IMR-90 (cell line): ENCODE measurements at regions of chr7 and their contacts with region 1.

Region 1: DNA sequence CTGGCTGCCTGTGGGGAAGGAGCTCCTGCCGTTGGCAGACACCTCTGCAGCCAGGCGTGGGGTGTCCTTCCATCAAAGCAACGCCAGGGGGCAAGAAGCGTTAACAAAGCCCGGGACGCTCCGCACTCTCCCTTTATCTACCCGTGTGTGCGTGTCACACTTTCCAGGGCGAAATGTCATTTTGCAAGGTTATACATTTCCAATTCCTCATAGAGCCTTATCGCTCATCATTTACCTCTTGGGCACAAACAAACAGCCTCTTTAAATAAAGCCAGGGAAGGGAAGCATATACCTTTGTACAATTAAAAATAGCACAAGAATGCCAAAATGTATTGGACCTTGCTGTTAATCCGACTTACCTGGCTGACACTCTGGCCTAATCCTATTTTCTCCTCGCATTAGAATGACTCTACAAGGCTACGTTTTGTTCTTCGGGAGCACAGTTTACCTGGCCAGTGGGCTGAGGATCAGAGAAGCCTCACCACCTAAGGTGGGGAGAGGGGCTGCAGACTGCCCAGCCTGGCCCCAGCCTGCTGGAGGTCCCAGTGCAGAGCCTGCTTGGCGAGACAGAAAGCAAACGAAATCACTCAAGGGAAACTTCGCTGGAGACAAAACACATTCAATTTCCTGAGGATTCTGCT is 77.6 kb upstream of the EN2 start:
- DNase-seq: peak; percentile 54
- ATAC-seq: peak; percentile 83
- H3K4me3 ChIP-seq: no peak overlapping the region
- H3K27ac ChIP-seq: no peak overlapping the region
- H3K4me1 ChIP-seq: no peaks in the 10 kb centered on the region; the same call in 1 of the 2 replicates
- H3K27me3 ChIP-seq: peaks cover 81% of the 10 kb centered on the region
- CTCF ChIP-seq: peak; percentile 54
- POLR2A ChIP-seq: no peak
- RAD21 ChIP-seq: peak; percentile 37

Region 2: DNA sequence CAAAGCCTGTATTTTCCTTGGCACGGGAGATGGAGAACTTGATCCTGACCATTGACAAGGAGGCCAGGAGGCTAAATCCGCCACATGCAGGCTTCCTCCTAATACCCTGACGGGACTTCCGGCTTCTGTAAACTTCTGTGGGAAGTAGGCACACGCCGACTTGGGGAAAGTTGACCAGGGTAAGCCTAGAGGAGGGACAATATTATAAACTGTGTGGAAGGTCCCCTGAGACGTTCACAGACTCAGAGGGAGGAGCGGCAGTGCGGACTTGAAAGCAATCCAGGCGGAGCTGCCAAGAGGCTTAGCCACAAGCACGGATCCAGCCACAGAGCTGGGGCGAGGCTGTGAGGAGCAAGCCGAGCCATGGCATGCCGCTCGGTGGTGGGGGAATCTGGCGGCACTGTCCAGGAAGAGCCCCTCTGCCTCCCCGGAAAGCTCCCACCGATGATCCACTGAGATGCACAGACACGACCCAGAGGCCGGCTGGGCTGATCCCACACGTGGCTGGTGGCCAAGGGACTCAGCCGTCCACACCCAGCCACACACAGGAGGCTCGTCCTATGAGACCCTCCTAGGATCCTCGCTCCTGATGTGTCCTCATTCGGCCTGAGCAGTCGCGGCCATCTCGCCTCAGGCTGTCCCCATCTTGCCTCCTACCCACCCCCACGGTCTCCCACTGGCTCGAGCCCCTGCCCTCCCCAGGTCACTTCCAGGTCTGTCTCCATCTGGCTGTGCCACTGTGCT is 122.7 kb before region 1 on chr7:
- CTCF ChIA-PET with region 1: no interaction called
- POLR2A ChIA-PET with region 1: no interaction called
- dilution Hi-C with region 1: no loop called
- in situ Hi-C with region 1: no loop called
- intact Hi-C with region 1: no loop called
- DNase-seq: no peak
- ATAC-seq: no peak
- H3K4me3 ChIP-seq: no peak overlapping the region
- H3K27ac ChIP-seq: no peak overlapping the region
- H3K4me1 ChIP-seq: no peaks in the 10 kb centered on the region
- H3K27me3 ChIP-seq: peaks cover 3% of the 10 kb centered on the region; the same call in 1 of the 2 replicates
- CTCF ChIP-seq: no peak
- POLR2A ChIP-seq: no peak
- RAD21 ChIP-seq: no peak

Region 3: GRCh38 chr7:155405399-155406318 is 25.3 kb after region 1 on chr7:
- CTCF ChIA-PET with region 1: no interaction called
- POLR2A ChIA-PET with region 1: no interaction called
- dilution Hi-C with region 1: no loop called
- in situ Hi-C with region 1: no loop called
- intact Hi-C with region 1: no loop called
- DNase-seq: no peak
- ATAC-seq: peak; percentile 63
- H3K4me3 ChIP-seq: no peak overlapping the region
- H3K27ac ChIP-seq: no peak overlapping the region
- H3K4me1 ChIP-seq: no peaks in the 10 kb centered on the region
- H3K27me3 ChIP-seq: peaks cover 4% of the 10 kb centered on the region; the same call in 1 of the 2 replicates
- CTCF ChIP-seq: no peak
- POLR2A ChIP-seq: no peak
- RAD21 ChIP-seq: no peak

Region 4: DNA sequence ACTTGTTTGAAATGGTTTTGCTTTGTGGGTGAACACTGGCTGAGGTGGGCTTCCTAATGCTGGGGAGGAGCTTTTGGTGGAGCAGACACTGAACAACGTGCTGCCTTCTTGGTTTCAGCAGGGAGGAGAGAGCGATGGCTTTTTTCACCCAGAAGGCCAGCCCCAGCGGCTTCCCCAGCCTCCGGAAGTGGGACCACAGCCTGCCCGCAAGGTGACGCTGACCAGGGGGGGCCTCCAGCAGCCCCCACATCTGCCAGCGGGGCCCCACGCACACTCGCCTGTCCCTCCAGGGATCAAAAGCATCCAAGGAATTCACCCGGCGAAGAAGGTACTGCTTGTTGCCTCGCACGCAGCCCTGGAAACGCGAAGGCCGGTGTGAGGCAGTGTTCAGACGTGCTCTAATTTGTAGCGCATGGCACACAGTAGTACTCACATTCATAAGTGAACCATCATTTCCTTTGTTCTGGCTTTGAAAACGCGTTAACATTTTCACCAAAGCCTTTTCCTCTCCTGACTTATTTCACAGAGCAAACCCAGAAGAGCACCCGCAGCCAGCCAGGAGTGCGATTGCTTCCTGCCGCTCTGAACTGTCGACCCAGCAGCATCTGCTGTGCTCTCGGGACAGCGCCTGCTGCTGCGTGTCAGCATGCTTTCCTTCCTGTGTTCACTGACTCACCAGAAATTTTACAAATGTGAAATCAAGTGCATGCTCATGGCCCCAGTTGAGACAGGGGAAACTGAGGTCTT is 383.5 kb after region 1 on chr7:
- CTCF ChIA-PET with region 1: no interaction called
- POLR2A ChIA-PET with region 1: no interaction called
- dilution Hi-C with region 1: no loop called
- in situ Hi-C with region 1: loop called (anchors 25 kb)
- intact Hi-C with region 1: loop called (anchors 2 kb)
- DNase-seq: peak; percentile 77
- ATAC-seq: peak; percentile 53
- H3K4me3 ChIP-seq: no peak overlapping the region
- H3K27ac ChIP-seq: no peak overlapping the region
- H3K4me1 ChIP-seq: peaks cover 2% of the 10 kb centered on the region; the same call in 1 of the 2 replicates
- H3K27me3 ChIP-seq: no peaks in the 10 kb centered on the region
- CTCF ChIP-seq: no peak
- POLR2A ChIP-seq: no peak
- RAD21 ChIP-seq: no peak

Region 5: GRCh38 chr7:155769701-155770100 is 389.4 kb after region 1 on chr7:
- CTCF ChIA-PET with region 1: no interaction called
- POLR2A ChIA-PET with region 1: no interaction called
- dilution Hi-C with region 1: no loop called
- in situ Hi-C with region 1: loop called (anchors 25 kb)
- intact Hi-C with region 1: loop called (anchors 2 kb)
- DNase-seq: no peak
- ATAC-seq: no peak
- H3K4me3 ChIP-seq: no peak overlapping the region
- H3K27ac ChIP-seq: no peak overlapping the region
- H3K4me1 ChIP-seq: no peaks in the 10 kb centered on the region
- H3K27me3 ChIP-seq: no peaks in the 10 kb centered on the region
- CTCF ChIP-seq: no peak
- POLR2A ChIP-seq: no peak
- RAD21 ChIP-seq: no peak

Region 6: GRCh38 chr7:156275292-156275691 is 895.0 kb after region 1 on chr7:
- CTCF ChIA-PET with region 1: no interaction called
- POLR2A ChIA-PET with region 1: no interaction called
- dilution Hi-C with region 1: no loop called
- in situ Hi-C with region 1: no loop called
- intact Hi-C with region 1: no loop called
- DNase-seq: no peak
- ATAC-seq: no peak
- H3K4me3 ChIP-seq: no peak overlapping the region
- H3K27ac ChIP-seq: no peak overlapping the region
- H3K4me1 ChIP-seq: no peaks in the 10 kb centered on the region
- H3K27me3 ChIP-seq: no peaks in the 10 kb centered on the region
- CTCF ChIP-seq: no peak
- POLR2A ChIP-seq: no peak
- RAD21 ChIP-seq: no peak